ENCODE measurements at regions of chr3 and their contacts with region 1.

Region 1: DNA sequence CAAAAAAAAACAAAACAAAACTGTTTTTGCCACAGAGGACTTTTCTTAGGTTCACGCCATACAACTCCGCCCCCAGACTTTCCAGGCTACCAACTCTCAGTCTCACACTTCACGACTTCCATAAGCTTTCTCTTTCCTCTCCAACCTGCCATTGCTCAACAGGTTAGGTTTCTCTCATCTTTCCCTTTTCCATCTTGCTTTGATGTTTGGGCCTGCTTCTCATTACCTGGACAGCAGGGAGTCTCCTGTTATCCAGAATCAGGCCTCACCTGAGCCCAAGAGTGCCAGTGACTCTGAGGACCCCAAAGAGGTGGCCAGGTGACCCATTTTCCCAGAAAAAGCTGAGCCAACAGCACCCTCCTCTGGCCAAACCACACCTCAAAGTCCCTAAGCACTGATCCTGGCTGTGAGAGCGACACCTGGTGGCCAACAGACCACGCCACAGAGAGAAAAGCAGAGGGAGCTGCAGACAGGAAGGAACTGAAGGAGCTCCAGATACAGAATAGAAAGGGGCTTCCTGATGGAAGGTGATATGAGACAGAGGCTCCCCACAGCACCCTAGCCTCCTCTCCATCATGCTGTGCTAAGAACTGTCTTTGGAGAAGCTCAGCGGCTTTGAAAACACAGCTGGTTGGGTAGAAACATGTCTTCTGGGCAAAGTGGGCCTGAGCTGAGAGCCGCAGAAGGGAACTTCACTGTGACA is 4.0 kb downstream of the CCDC51 start:
- DNase-seq: peak; percentile 90
- H3K4me3 Mint-ChIP-seq: no peak overlapping the region
- H3K27ac Mint-ChIP-seq: no peak overlapping the region
- H3K4me1 Mint-ChIP-seq: peaks cover 31% of the 10 kb centered on the region
- H3K27me3 Mint-ChIP-seq: no peaks in the 10 kb centered on the region

Region 2: DNA sequence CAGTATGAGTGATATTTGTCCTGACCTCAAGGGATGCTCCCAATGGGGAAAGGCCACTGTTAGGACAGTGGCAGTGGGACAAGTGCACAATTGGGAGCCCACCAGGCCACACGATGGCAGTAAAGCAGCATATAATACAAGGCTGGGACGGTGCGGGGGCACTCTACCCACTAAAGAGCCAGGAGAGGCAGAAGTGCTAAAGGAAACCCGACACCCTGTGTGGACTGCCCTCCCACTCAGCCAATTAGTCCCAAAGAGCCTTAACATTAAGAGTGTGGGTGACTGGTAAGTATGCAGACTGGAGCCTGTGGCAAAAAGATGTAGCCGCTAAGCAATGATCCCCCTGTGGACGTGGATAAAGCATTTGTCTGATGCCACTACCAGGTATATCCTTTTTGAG is 203.2 kb before region 1 on chr3:
- CTCF ChIA-PET with region 1: interaction called, 23 read pairs
- POLR2A ChIA-PET with region 1: no interaction called
- DNase-seq: peak; percentile 66
- H3K4me3 Mint-ChIP-seq: no peak overlapping the region
- H3K27ac Mint-ChIP-seq: no peak overlapping the region
- H3K4me1 Mint-ChIP-seq: peaks cover 5% of the 10 kb centered on the region
- H3K27me3 Mint-ChIP-seq: no peaks in the 10 kb centered on the region

Region 3: GRCh38 chr3:48273594-48274211 is 162.2 kb before region 1 on chr3:
- CTCF ChIA-PET with region 1: interaction called, 80 read pairs
- POLR2A ChIA-PET with region 1: no interaction called
- DNase-seq: peak; percentile 67
- H3K4me3 Mint-ChIP-seq: no peak overlapping the region
- H3K27ac Mint-ChIP-seq: no peak overlapping the region
- H3K4me1 Mint-ChIP-seq: peaks cover 20% of the 10 kb centered on the region
- H3K27me3 Mint-ChIP-seq: no peaks in the 10 kb centered on the region

Region 4: DNA sequence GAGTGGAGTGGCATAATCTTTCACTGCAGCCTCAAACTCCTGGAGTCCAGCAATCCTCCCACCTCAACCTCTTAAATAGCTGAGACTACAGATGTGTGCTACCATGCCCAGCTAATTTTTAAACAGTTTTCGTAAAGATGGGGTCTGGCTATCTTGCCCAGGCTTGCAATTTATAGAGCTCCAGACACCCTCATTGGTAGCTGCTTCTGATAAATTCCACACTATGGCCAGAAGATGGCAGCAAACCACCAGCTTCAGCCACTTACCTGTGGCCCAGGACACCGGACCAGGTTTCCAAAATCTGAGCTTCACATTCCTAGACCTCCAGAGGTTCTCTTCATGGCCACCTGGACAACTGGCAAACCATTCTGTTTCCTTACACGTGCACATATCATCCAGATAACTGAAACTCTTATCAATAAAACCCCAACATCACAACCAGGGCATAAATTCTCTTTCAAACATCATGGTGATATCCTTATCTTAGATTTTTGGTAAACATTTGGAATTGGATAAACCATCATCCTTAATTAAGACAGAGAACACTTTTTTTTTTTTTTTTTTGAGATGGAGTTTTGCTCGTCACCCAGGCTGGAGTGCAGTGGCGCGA is 35.0 kb before region 1 on chr3:
- CTCF ChIA-PET with region 1: interaction called, 33 read pairs
- POLR2A ChIA-PET with region 1: no interaction called
- DNase-seq: peak; percentile 77
- H3K4me3 Mint-ChIP-seq: no peak overlapping the region
- H3K27ac Mint-ChIP-seq: no peak overlapping the region
- H3K4me1 Mint-ChIP-seq: no peaks in the 10 kb centered on the region
- H3K27me3 Mint-ChIP-seq: no peaks in the 10 kb centered on the region

Region 5: DNA sequence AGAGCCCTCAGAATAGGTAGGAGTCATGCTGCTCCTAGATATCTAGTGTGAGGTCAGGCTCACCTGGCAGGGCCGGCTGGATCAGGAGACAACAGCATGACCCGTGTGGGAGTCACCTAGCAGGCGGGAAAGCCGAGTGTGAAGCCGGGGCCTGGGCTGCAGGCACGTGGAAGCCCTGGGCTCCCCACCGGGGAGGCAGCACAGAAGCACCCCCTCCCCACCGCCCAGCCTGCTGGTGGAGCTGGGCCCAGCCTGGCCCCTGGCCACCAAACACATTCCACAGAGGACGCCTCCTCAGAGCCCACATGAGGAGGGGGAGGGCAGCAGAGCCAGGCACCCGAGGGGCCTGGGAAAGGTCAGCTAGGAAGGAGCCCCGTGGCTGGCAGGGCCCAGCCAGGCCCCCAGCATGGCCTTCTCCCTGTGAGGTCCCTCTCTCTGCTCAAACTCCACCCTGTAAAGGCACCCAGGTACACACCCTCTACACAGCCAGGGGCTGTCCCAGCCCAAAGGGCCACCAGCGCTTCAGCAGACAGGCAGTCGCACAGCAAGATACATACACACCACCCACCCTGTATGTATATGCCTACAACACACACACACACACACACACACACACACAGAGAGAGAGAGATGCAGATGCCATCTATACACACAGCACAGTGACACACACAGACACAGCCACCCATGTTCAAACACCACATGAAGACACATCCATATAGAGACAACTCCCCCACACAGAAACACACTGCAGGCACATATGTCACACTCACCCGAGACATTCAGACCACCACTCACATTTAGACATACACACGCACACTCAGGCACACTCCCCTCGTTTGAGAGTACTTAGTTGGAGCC is 10.5 kb before region 1 on chr3:
- CTCF ChIA-PET with region 1: interaction called, 27 read pairs
- POLR2A ChIA-PET with region 1: no interaction called
- DNase-seq: no peak
- H3K4me3 Mint-ChIP-seq: no peak overlapping the region
- H3K27ac Mint-ChIP-seq: no peak overlapping the region
- H3K4me1 Mint-ChIP-seq: peaks cover 10% of the 10 kb centered on the region
- H3K27me3 Mint-ChIP-seq: peaks cover 20% of the 10 kb centered on the region

Region 6: DNA sequence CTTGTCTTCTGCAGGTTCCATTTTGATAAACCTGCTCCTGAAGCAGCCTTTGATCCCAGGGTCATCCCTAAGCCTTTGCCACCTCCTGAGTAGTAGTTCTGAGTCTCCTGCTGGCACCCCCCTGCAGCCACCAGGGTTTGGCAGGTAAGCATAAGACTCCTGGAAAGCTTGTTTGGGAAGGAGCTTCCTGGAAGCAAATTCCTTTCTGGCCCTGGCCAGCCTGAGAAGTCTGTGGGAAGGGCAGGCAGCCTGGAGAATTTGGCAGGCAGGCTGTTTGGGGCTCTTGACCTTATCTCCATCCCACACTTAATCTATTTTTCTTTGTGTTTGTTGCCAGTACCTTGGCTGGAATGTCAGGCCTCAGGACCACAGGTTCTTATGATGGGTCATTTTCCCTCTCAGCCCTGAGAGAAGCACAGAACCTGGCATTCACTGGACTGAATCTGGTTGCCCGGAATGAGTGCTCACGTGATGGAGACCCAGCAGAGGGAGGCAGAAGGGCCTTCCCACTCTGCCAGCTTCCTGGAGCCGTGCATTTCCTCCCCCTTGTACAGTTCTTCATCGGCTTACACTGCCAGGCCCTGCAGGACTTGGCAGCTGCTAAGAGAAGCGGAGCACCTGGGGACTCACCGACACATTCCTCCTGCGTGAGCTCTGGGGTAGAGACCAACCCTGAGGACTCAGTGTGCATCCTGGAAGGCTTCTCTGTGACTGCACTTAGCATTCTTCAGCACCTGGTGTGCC is 24.0 kb after region 1 on chr3:
- CTCF ChIA-PET with region 1: interaction called, 17 read pairs
- POLR2A ChIA-PET with region 1: interaction called, 3 read pairs
- DNase-seq: no peak
- H3K4me3 Mint-ChIP-seq: no peak overlapping the region
- H3K27ac Mint-ChIP-seq: no peak overlapping the region
- H3K4me1 Mint-ChIP-seq: peaks cover 15% of the 10 kb centered on the region
- H3K27me3 Mint-ChIP-seq: no peaks in the 10 kb centered on the region

Region 7: GRCh38 chr3:48548729-48549705 is 113.1 kb after region 1 on chr3:
- CTCF ChIA-PET with region 1: interaction called, 28 read pairs
- POLR2A ChIA-PET with region 1: no interaction called
- DNase-seq: peak; percentile 89
- H3K4me3 Mint-ChIP-seq: no peak overlapping the region
- H3K27ac Mint-ChIP-seq: peak overlapping the region; percentile 62
- H3K4me1 Mint-ChIP-seq: peaks cover 45% of the 10 kb centered on the region
- H3K27me3 Mint-ChIP-seq: no peaks in the 10 kb centered on the region